Gastrocnemius medialis (tissue), 4 donors: ENCODE measurements at regions of chr7 and their contacts with region 1.

Region 1: DNA sequence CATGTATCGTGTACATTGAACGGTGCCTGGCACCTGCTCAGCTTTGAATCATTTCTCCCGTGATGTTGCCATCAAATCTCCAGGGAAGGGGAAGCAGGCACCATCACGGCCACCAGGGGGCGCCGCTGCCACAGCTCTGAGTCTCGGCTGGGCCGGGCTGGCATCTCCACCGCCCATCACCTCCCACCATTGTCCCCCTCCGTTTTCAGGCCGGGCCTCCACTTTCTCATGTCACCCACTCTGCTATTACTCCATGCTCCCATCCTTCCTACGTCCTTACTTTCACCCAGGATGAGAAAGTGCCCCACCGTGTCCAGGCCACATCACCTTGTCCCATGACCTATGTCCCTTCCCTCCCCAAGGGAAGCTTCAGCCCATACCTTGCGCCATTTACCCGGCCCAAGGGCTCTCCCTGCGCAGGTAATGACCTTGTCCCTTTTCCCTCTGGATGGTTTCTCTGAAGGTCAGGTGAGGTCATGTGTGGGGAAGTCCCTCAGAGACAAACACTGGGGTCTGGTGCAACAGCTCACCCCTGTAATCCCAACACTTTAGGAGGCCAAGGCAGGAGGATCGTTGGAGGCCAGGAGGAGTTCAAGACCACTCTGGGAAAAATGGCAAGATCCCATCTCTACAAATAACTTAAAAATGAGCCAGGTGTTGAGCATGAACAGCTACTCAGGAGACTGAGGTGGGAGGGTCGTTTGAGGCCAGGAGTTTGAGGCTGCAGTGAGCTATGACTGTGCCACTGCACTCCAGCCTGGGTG is 31.8 kb upstream of the OCM2 start:
- DNase-seq: peak; percentile 18 to 41
- ATAC-seq: peak; percentile 60 to 73
- H3K4me3 ChIP-seq: no peak overlapping the region
- H3K27ac ChIP-seq: no peak overlapping the region
- H3K4me1 ChIP-seq: no peaks in the 10 kb centered on the region
- H3K27me3 ChIP-seq: no peaks in the 10 kb centered on the region
- CTCF ChIP-seq: peak; percentile 44 to 84 (median 76)
- POLR2A ChIP-seq: no peak

Region 2: DNA sequence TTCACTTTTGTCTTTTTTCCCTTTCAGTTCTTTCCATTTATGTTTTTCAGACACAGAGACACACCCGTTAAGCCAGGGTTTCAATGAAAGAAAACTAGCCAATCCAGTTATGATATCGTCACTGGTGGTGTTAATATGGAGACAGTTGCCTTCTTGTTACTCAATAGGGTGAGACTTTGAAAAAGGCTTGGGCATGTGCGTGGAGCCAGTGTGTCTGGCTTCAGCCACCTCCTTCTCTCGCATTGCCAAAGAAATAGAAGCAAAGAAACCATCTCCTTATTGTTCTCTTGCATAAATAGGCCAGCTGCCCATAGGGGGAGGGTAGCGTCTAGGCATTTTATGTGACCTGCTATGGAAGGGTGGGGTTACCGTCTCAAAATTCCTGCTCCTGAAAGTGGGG is 1100.5 kb before region 1 on chr7:
- in situ Hi-C with region 1: no loop called
- intact Hi-C with region 1: no loop called
- DNase-seq: no peak
- ATAC-seq: no peak
- H3K4me3 ChIP-seq: no peak overlapping the region
- H3K27ac ChIP-seq: no peak overlapping the region
- H3K4me1 ChIP-seq: no peaks in the 10 kb centered on the region
- H3K27me3 ChIP-seq: no peaks in the 10 kb centered on the region
- CTCF ChIP-seq: no peak
- POLR2A ChIP-seq: no peak

Region 3: DNA sequence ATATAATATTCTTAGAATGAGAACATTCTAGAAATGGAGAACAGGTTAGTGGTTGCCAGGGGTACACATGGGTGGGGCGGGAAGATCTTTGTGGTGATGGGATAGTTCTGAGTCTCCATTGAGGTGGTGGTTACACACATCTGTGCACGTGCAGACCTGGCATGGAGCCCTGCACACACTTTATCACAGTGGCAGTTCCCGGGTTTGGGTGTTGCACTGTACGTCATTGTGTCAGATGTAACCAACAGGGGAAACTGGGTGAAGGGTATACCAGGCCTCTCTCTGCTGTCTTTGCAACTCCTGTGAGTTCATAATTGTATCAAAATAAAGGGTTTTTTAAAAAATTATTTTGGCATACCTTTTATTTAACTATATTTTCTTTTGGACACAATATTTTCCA is 136.0 kb after region 1 on chr7:
- in situ Hi-C with region 1: loop called in 3 of 4 experiments (anchors 10 to 25 kb)
- intact Hi-C with region 1: no loop called
- DNase-seq: no peak
- ATAC-seq: no peak
- H3K4me3 ChIP-seq: no peak overlapping the region
- H3K27ac ChIP-seq: no peak overlapping the region
- H3K4me1 ChIP-seq: no peaks in the 10 kb centered on the region
- H3K27me3 ChIP-seq: no peaks in the 10 kb centered on the region
- CTCF ChIP-seq: no peak
- POLR2A ChIP-seq: no peak

Region 4: DNA sequence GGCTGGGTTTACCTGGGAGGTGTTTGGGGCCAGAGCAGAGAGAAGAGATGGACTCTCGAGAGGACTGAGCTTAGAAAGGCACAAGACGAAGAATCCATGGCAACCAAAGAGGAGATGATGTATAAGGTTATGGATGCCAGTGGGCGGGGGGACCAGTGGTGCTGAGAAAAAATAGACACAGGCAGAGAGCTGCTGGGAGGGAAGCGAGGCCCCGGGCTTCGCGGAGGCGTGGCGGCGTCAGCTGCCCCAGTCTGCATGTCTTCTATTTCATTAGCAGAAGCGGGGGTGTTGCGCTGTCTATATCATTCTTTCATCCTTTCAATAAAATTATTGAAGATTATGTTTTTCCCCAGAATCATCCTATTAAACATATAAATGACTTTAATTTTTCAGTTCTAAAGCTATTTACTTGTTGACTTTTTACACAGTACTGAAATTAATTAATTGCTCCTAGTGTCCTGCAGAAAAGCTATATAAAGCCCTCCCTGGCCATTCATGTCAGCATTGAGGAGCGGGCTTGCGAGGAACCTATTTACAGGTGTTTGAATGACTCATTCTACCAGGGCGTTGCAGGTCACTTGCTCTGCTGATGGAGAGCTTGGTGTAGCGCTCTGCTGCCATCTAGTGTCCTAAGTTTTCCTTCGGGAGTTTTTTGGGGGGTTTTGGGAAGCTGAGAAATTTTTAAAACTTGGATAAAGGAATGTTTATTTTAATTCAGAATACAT is 146.6 kb after region 1 on chr7:
- in situ Hi-C with region 1: loop called in 2 of 4 experiments (anchors 10 to 25 kb)
- intact Hi-C with region 1: loop called (anchors 1 kb)
- DNase-seq: peak; percentile 72 to 77
- ATAC-seq: peak; percentile 92 to 97
- H3K4me3 ChIP-seq: no peak overlapping the region
- H3K27ac ChIP-seq: peak overlapping the region; percentile 5 to 90 (median 79)
- H3K4me1 ChIP-seq: peaks cover 22 to 23% of the 10 kb centered on the region in 2 donors
- H3K27me3 ChIP-seq: no peaks in the 10 kb centered on the region
- CTCF ChIP-seq: peak; percentile 77 to 94 (median 81)
- POLR2A ChIP-seq: no peak

Region 5: GRCh38 chr7:98240961-98241674 is 219.3 kb after region 1 on chr7:
- in situ Hi-C with region 1: no loop called
- intact Hi-C with region 1: loop called (anchors 5 kb)
- DNase-seq: no peak
- ATAC-seq: peak; percentile 55 to 63
- H3K4me3 ChIP-seq: no peak overlapping the region
- H3K27ac ChIP-seq: no peak overlapping the region
- H3K4me1 ChIP-seq: no peaks in the 10 kb centered on the region
- H3K27me3 ChIP-seq: no peaks in the 10 kb centered on the region
- CTCF ChIP-seq: peak; percentile 25 to 75 (median 67)
- POLR2A ChIP-seq: no peak